ENCODE measurements at regions of chr14 and their contacts with region 1.

Region 1: GRCh38 chr14:64074961-64075612 is 219.1 kb downstream of the ESR2 start:
- DNase-seq: no peak
- H3K4me3 ChIP-seq: no peak overlapping the region
- H3K27ac ChIP-seq: no peak overlapping the region
- H3K4me1 ChIP-seq: no peaks in the 10 kb centered on the region
- CTCF ChIP-seq: no peak

Region 2: GRCh38 chr14:64407329-64407728 is 332.2 kb after region 1 on chr14:
- CTCF ChIA-PET with region 1: no interaction called
- POLR2A ChIA-PET with region 1: interaction called, 10 read pairs
- intact Hi-C with region 1: no loop called
- DNase-seq: no peak
- H3K4me3 ChIP-seq: no peak overlapping the region
- H3K27ac ChIP-seq: no peak overlapping the region
- H3K4me1 ChIP-seq: no peaks in the 10 kb centered on the region
- CTCF ChIP-seq: no peak

Measured in OCI-LY7 (cell line).